Right cardiac atrium (tissue), 5 donors: ENCODE measurements at regions of chr1 and their contacts with region 1.

Region 1: GRCh38 chr1:21594935-21595897 is 73.9 kb downstream of the RAP1GAP start:
- DNase-seq: peak; percentile 78 to 85 (median 79)
- ATAC-seq: peak in 1 of 2 donors; percentile 55
- H3K4me3 ChIP-seq: no peak overlapping the region
- H3K27ac ChIP-seq: no peak overlapping the region
- H3K4me1 ChIP-seq: no peaks in the 10 kb centered on the region
- H3K27me3 ChIP-seq: no peaks in the 10 kb centered on the region

Region 2: GRCh38 chr1:21378705-21379494 is 216.3 kb before region 1 on chr1:
- intact Hi-C with region 1: loop called in 1 of 4 experiments (anchors 10 kb)
- DNase-seq: no peak
- ATAC-seq: no peak
- H3K4me3 ChIP-seq: no peak overlapping the region
- H3K27ac ChIP-seq: no peak overlapping the region
- H3K4me1 ChIP-seq: no peaks in the 10 kb centered on the region
- H3K27me3 ChIP-seq: no peaks in the 10 kb centered on the region

Region 3: DNA sequence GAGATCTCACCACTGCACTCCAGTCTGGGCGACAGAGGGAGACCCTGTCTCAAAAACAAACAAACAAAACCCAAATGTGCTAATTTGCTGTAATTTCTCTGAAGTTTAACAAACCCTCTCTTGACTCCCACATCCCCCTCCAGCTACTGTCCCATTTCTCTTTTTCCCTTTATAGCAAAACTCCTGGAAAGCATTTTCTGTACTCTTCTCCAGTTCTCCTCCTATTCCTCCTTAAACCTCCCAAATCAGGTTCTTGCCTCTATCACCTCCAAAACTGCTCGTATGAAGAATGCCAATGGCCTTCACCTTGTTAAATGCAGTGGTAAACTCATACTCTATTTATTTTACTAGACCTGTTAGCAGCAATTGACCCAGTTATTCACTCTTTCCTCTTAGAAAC is 191.4 kb after region 1 on chr1:
- intact Hi-C with region 1: no loop called
- DNase-seq: no peak
- ATAC-seq: no peak
- H3K4me3 ChIP-seq: no peak overlapping the region
- H3K27ac ChIP-seq: no peak overlapping the region
- H3K4me1 ChIP-seq: no peaks in the 10 kb centered on the region
- H3K27me3 ChIP-seq: no peaks in the 10 kb centered on the region

Region 4: DNA sequence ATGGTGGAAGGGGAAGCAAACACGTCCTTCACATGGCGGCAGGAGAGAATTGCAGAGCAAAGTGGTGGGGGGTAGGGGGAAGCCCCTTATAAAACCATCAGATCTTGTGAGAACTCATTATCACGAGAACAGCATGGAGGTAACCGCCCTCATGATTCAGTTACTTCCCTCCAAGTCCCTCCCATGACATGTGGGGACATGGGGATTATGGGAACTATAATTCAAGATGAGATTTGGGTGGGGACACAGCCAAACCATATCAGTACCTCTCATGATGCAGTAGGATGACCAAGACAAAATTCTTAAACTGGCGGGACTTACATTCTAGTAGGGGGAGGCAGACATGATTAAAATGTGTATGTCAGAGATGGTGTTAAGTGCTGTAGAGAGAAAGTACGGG is 508.9 kb after region 1 on chr1:
- intact Hi-C with region 1: no loop called
- DNase-seq: no peak
- ATAC-seq: no peak
- H3K4me3 ChIP-seq: no peak overlapping the region
- H3K27ac ChIP-seq: no peak overlapping the region
- H3K4me1 ChIP-seq: peaks cover 5% of the 10 kb centered on the region
- H3K27me3 ChIP-seq: no peaks in the 10 kb centered on the region